Head of caudate nucleus (tissue), 42 donors: ENCODE measurements at regions of chr5 and their contacts with region 1.

Region 1: GRCh38 chr5:150458819-150459557 is 9.4 kb upstream of the RPS14 start:
- DNase-seq: peak; percentile 64 to 94 (median 84)

Region 2: GRCh38 chr5:150503977-150504620 is 45.1 kb after region 1 on chr5:
- intact Hi-C with region 1: no loop called
- DNase-seq: peak in 40 of 42 donors; percentile 43 to 87 (median 70)

Region 3: DNA sequence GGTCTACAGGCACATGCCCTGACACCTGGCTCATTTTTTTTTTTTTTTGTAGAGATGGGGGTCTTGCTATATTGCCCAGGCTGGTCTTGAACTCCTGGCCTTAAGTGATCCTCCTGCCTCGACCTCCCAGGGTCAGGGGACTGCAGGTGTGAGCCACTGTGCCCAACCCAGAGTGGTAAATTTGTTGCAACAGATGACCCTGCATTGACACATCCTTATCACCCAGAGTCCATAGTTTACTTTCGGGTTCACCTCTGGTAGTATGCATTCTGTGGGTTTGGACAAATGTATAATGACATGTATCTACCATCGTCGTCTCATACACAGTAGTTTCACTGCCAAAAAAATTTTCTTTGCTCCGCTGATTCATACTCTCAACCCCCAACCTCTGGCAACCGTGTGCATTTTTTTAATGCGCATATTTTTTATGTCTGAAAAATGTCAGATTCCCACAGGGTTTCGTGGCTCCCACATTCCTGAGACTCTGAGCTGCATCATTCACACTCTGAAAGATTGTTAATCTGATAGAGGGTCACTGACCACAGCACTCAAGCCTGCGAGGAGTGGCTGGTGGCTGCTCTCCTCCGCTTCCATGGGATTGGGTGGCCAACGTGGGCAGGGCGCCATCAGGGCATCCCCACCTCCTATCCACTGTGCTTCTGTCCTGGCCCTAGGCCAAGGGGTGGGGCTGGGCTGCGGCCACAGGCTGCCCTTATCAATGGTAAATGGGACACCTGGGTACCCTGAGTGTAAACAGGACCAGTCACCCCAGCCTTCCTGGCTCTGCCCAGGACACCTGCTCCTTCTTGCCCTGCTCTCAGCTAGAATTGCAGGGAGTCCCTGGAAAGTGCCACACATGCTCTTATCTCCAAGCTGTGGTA is 58.5 kb after region 1 on chr5:
- intact Hi-C with region 1: loop called (anchors 2 kb)
- DNase-seq: peak in 16 of 42 donors; percentile 32 to 76 (median 53)

Region 4: DNA sequence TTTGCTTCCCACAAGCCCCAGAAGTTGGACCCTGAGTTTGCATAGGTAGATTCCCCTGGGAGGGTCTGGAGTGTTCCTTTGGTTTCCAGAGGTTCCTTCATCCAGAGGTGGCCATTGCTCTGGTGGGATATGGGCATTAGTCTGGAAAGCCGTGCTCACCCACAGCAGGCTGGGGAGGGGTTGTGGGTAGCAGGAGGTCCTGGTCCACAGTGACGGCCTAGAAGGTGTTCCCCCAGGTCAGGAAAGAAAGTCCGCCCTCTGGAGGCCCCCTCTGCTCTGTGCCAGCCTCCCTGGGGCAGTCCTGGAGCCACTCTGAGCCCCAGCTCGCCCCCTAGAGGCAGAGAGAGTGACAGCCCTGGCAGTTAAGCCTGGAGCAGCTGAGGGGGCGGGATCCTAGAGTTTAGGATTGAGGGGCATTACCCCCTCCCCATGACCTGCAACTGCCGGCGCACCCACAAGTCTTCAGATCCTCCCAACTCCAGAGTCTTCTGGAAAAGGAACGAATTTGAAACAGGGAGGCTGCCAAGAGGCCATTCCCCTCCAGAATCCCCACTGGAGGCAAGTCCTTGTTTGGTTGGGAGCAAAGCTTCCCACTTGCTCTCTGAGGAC is 85.7 kb after region 1 on chr5:
- intact Hi-C with region 1: loop called (anchors 5 kb)
- DNase-seq: peak; percentile 61 to 91 (median 80)

Region 5: GRCh38 chr5:150689120-150689519 is 230.1 kb after region 1 on chr5:
- intact Hi-C with region 1: no loop called
- DNase-seq: no peak

Region 6: GRCh38 chr5:150700594-150701293 is 241.8 kb after region 1 on chr5 and contains the start of gene RBM22:
- intact Hi-C with region 1: loop called (anchors 5 kb)
- DNase-seq: peak; percentile 91 to 98 (median 95)